ENCODE measurements at regions of chr15 and their contacts with region 1.

Region 1: GRCh38 chr15:71651750-71652186 is 158.6 kb upstream of the NR2E3 start:
- DNase-seq: peak; percentile 86
- ATAC-seq: peak; percentile 93
- H3K4me3 ChIP-seq: no peak overlapping the region
- H3K27ac ChIP-seq: no peak overlapping the region
- H3K4me1 ChIP-seq: peaks cover 6% of the 10 kb centered on the region
- H3K27me3 ChIP-seq: no peaks in the 10 kb centered on the region
- CTCF ChIP-seq: peak; percentile 74
- POLR2A ChIP-seq: no peak
- RAD21 ChIP-seq: peak; percentile 82

Region 2: GRCh38 chr15:71386448-71387236 is 265.1 kb before region 1 on chr15:
- CTCF ChIA-PET with region 1: no interaction called
- POLR2A ChIA-PET with region 1: no interaction called
- dilution Hi-C with region 1: no loop called
- in situ Hi-C with region 1: no loop called
- intact Hi-C with region 1: loop called (anchors 5 kb)
- DNase-seq: peak; percentile 38
- ATAC-seq: no peak
- H3K4me3 ChIP-seq: no peak overlapping the region
- H3K27ac ChIP-seq: no peak overlapping the region
- H3K4me1 ChIP-seq: peaks cover 16% of the 10 kb centered on the region
- H3K27me3 ChIP-seq: no peaks in the 10 kb centered on the region
- CTCF ChIP-seq: peak; percentile 48
- POLR2A ChIP-seq: no peak
- RAD21 ChIP-seq: peak; percentile 65

Region 3: GRCh38 chr15:71559098-71559497 is 92.7 kb before region 1 on chr15:
- CTCF ChIA-PET with region 1: no interaction called
- POLR2A ChIA-PET with region 1: no interaction called
- dilution Hi-C with region 1: no loop called
- in situ Hi-C with region 1: no loop called
- intact Hi-C with region 1: no loop called
- DNase-seq: peak; percentile 81
- ATAC-seq: peak; percentile 88
- H3K4me3 ChIP-seq: no peak overlapping the region
- H3K27ac ChIP-seq: no peak overlapping the region
- H3K4me1 ChIP-seq: peaks cover 9% of the 10 kb centered on the region; the same call in 1 of the 2 replicates
- H3K27me3 ChIP-seq: 0 out of 2 replicates have a peak, but pooled peaks cover under 1% of the 10 kb centered on the region
- CTCF ChIP-seq: no peak
- POLR2A ChIP-seq: no peak
- RAD21 ChIP-seq: no peak

Region 4: DNA sequence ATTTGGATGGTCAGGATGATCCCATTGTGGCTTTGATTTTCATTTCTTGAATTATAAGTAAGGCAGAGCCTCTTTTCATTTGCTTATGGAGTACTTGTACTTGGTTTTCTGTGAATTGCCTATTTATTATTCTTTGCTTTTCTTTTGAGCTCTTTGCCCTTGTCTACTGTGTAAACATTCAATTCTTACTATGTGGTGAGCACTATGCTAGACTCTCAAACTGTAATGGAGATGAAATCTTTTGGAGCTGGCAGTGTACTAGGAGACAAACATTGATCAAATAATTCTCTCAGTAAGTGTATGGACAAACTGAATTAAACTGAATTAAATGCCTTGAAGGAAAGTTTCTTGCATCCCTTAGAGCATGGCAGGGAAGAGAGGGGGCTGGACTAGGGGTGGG is 71.6 kb after region 1 on chr15:
- CTCF ChIA-PET with region 1: no interaction called
- POLR2A ChIA-PET with region 1: no interaction called
- dilution Hi-C with region 1: no loop called
- in situ Hi-C with region 1: no loop called
- intact Hi-C with region 1: loop called (anchors 5 kb)
- DNase-seq: no peak
- ATAC-seq: peak; percentile 76
- H3K4me3 ChIP-seq: no peak overlapping the region
- H3K27ac ChIP-seq: no peak overlapping the region
- H3K4me1 ChIP-seq: 0 out of 2 replicates have a peak, but pooled peaks cover 1% of the 10 kb centered on the region
- H3K27me3 ChIP-seq: no peaks in the 10 kb centered on the region
- CTCF ChIP-seq: no peak
- POLR2A ChIP-seq: no peak
- RAD21 ChIP-seq: no peak